AG04450 (cell line): ENCODE measurements at regions of chr1 and their contacts with region 1.

Region 1: GRCh38 chr1:61225478-61225877 is 143.1 kb downstream of the NFIA start:
- DNase-seq: no peak
- H3K4me3 ChIP-seq: no peak overlapping the region
- H3K27ac ChIP-seq: no peak overlapping the region
- H3K27me3 ChIP-seq: no peaks in the 10 kb centered on the region
- CTCF ChIP-seq: no peak

Region 2: DNA sequence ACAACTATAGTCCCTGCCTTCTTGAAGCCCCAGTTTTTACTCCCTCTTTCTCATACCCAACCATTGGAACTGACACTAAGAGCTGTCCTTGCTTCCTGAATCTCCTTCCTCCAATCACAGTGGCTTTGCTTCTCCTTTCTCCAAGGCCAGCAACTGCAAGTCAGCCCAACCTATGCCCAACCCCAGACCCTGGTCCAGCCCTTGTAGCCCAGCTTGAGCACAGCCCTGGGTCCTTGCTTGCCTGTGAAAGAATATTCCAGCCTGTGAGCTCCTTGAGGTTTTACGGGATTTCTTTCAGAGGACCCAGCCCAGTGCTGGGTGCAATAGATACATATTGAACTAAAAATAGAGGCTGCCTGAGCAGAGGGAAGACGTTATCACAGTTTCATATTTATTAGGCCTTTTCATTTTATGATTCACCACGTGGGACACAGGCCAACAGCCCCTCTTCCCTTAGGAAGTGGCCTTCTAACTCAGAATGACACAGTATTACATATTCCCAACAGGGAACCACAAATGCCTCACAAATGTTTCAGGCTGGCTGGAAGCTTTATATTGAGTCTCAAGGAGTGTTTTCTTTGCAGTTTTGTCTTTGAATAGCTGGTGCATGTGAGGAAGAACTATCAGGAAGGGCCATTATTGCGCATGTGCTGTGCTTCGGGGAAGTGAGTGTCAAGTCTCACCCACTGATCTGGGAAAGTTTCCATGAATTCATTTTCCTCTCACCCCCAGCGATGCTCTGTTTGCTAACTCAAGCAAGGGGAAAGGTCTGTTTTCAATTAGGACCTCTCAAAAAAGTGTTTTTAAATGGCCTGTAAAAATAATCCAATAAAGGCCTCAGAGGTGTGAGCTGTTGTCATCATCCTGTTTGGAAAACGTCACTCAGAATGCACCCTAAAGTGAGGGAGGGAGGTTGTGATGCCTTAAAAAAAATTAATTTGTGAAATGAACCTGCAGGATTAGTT is 235.4 kb before region 1 on chr1:
- CTCF ChIA-PET with region 1: interaction called, 11 read pairs
- POLR2A ChIA-PET with region 1: no interaction called
- DNase-seq: peak; percentile 37
- H3K4me3 ChIP-seq: no peak overlapping the region
- H3K27ac ChIP-seq: no peak overlapping the region
- H3K27me3 ChIP-seq: peaks cover 4% of the 10 kb centered on the region
- CTCF ChIP-seq: no peak

Region 3: GRCh38 chr1:61403679-61404596 is 178.5 kb after region 1 on chr1:
- CTCF ChIA-PET with region 1: no interaction called
- POLR2A ChIA-PET with region 1: no interaction called
- DNase-seq: no peak
- H3K4me3 ChIP-seq: no peak overlapping the region
- H3K27ac ChIP-seq: no peak overlapping the region
- H3K27me3 ChIP-seq: no peaks in the 10 kb centered on the region
- CTCF ChIP-seq: no peak